ENCODE measurements at regions of chr5 and their contacts with region 1.

Region 1: DNA sequence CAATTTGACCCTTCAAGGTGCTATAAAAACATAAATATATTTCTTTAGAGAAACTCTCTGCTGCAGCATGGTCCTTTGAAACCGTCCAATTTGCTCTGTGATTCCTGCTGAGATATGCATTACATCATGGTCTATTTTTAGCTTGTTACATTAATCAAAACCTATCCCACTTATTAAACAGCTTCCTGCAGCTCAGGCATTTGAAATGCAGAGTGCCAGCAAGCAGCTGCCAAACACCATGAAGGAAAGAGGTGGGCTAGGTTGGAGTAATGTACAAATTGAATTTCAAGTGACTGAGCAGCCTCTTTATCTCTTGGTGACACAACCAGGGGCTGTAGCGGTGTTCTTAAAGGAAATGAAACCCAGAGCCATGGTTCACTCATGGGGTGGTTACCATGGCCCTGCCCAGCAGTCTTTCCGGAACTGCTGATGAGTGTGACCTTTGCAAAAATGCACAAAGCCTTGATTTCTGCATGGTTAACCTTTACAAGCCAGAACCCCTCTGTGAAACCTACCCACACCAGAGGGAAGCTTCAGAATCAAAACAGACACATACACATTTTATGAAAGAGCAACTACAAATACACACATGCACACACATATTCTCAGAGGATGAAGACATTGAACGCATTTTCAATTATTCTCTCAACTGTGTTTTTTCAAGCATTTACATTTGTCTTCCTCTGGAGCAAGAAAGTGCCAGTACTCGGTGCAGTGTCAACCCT is 155.8 kb upstream of the ZNF608 start:
- DNase-seq: peak; percentile 6
- H3K4me3 Mint-ChIP-seq: peak overlapping the region; percentile 59
- H3K27ac Mint-ChIP-seq: peak overlapping the region; percentile 52
- H3K4me1 Mint-ChIP-seq: peaks cover 18% of the 10 kb centered on the region
- H3K27me3 Mint-ChIP-seq: no peaks in the 10 kb centered on the region

Region 2: GRCh38 chr5:124583469-124584350 is 318.5 kb before region 1 on chr5:
- intact Hi-C with region 1: loop called (anchors 10 kb)
- DNase-seq: peak; percentile 1
- H3K4me3 Mint-ChIP-seq: no peak overlapping the region
- H3K27ac Mint-ChIP-seq: no peak overlapping the region
- H3K4me1 Mint-ChIP-seq: peaks cover 14% of the 10 kb centered on the region
- H3K27me3 Mint-ChIP-seq: no peaks in the 10 kb centered on the region

Region 3: GRCh38 chr5:124649491-124650146 is 252.6 kb before region 1 on chr5:
- intact Hi-C with region 1: loop called (anchors 1 kb)
- DNase-seq: peak; percentile 68
- H3K4me3 Mint-ChIP-seq: peak overlapping the region; percentile 34
- H3K27ac Mint-ChIP-seq: peak overlapping the region; percentile 85
- H3K4me1 Mint-ChIP-seq: peaks cover 20% of the 10 kb centered on the region
- H3K27me3 Mint-ChIP-seq: peaks cover 40% of the 10 kb centered on the region

Region 4: GRCh38 chr5:124920909-124921666 is 18.8 kb after region 1 on chr5:
- intact Hi-C with region 1: loop called (anchors 2 kb)
- DNase-seq: no peak
- H3K4me3 Mint-ChIP-seq: no peak overlapping the region
- H3K27ac Mint-ChIP-seq: no peak overlapping the region
- H3K4me1 Mint-ChIP-seq: no peaks in the 10 kb centered on the region
- H3K27me3 Mint-ChIP-seq: no peaks in the 10 kb centered on the region

Region 5: DNA sequence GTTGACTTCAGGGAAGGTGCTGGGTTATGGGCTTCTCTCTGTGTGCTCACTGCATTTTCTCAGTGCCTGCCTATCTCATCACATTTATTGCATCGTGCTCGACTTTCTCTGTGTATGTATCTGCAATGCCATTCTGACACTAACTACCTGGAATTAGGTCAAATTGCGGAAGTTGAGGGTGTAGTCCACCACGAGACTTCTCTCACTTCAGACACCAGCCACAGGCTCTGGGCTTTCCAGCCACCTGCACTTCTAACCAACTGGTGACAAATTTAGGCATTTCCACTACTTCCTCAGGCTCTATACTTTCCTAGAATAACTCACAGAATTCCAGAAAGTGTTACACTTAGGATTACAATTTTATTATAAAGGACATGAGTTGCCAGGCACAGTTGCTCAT is 32.8 kb after region 1 on chr5:
- intact Hi-C with region 1: loop called (anchors 1 kb)
- DNase-seq: peak; percentile 34
- H3K4me3 Mint-ChIP-seq: no peak overlapping the region
- H3K27ac Mint-ChIP-seq: peak overlapping the region; percentile 47
- H3K4me1 Mint-ChIP-seq: peaks cover 9% of the 10 kb centered on the region
- H3K27me3 Mint-ChIP-seq: no peaks in the 10 kb centered on the region

Region 6: GRCh38 chr5:125214080-125214479 is 311.8 kb after region 1 on chr5:
- intact Hi-C with region 1: loop called (anchors 10 kb)
- DNase-seq: no peak
- H3K4me3 Mint-ChIP-seq: no peak overlapping the region
- H3K27ac Mint-ChIP-seq: no peak overlapping the region
- H3K4me1 Mint-ChIP-seq: no peaks in the 10 kb centered on the region
- H3K27me3 Mint-ChIP-seq: no peaks in the 10 kb centered on the region